HCT116 (cell line): ENCODE measurements at regions of chr12 and their contacts with region 1.

Region 1: DNA sequence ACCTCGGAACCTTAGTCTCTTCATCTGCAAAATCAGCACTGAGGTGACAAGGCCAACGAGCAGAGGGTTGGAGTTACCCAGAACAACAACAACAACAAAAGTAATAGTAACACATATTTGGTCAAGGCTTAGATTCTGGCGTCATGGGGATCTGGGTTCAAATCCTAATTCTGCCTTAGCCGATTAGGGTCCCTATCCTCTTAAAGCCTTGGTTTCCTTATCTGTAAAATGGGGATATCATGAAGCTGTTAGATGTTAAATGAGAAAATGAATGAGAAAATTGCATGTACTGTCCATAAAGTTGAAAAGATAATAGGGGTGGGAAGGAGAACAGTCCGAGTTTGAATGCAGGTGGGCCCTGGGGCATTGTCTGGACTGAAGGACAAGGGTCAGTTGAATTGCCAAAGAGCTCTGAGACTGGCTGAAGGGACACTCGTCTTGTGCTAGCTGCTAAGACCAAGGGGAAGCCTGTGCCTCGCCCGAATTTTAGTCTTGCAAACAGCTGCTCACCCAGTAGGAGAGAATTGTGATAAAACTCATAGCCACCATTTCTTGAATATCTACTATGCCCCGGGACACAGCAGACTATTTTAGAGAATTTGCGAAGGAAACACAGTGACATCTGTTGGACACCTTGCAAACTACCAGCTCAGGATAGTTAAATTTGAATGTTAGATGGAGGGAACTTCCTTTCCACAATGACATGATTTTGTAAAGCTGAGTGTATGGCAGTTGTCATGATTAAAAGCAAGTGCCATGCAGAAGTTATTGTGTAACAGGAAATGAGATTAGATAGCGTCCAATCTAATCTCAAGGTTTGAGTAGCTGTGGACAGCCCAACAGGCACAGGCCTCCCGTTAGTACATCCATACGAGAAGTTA is 6.8 kb upstream of the HNF1A start:
- DNase-seq: peak; percentile 58
- ATAC-seq: peak; percentile 91
- H3K4me3 ChIP-seq: no peak overlapping the region
- H3K27ac ChIP-seq: no peak overlapping the region
- H3K4me1 ChIP-seq: no peaks in the 10 kb centered on the region
- H3K27me3 ChIP-seq: no peaks in the 10 kb centered on the region
- CTCF ChIP-seq: peak; percentile 76 to 90 (median 81)
- POLR2A ChIP-seq: no peak
- RAD21 ChIP-seq: peak; percentile 97

Region 2: GRCh38 chr12:120249875-120250795 is 721.4 kb before region 1 on chr12:
- CTCF ChIA-PET with region 1: no interaction called
- POLR2A ChIA-PET with region 1: no interaction called
- RAD21 ChIA-PET with region 1: no interaction called
- intact Hi-C with region 1: no loop called
- DNase-seq: no peak
- ATAC-seq: no peak
- H3K4me3 ChIP-seq: no peak overlapping the region
- H3K27ac ChIP-seq: peak overlapping the region; percentile 72
- H3K4me1 ChIP-seq: peaks cover 53 to 84% of the 10 kb centered on the region in 2 experiments
- H3K27me3 ChIP-seq: no peaks in the 10 kb centered on the region
- CTCF ChIP-seq: no peak
- POLR2A ChIP-seq: no peak
- RAD21 ChIP-seq: no peak

Region 3: DNA sequence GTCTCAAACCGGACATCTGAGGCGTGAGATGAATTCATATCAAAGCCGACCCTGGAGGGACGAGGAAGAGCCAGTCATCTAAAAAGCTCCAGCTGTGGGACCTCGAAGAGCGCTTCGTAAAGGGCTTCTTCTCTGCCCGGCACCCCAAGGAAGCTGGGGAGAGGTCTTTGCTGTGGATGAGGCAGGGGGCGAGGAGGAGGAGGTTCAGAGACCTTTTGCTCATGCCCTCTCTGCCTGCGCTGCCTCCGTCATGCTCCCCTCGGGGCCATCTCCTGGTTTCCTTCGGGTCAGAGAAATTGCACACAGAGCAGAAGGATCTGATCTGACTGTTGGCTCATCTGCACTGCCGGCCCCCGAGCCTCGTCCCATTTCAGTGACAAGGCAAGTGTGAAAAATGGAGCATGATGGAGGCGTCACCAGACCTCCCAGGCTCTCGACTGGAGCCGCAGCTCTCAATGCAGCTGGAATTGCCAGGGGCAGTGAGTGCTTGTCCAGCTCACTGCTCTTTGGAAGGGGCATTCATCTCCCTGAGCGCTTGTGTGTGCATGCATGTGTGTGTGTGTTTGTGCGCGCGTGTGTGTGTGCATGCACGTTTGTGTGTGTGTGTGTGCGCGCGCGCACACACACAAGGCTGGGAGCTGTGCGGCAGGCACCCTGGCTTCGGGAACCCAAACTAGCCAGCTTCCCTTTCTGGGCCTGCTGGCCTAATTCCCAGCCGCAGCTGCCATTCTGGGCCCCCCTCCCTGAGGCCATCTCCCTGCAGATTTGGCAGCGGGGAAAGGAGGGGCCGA is 321.9 kb before region 1 on chr12:
- CTCF ChIA-PET with region 1: interaction called, 18 read pairs
- POLR2A ChIA-PET with region 1: interaction called, 5 read pairs
- RAD21 ChIA-PET with region 1: no interaction called
- intact Hi-C with region 1: loop called (anchors 1 kb)
- DNase-seq: no peak
- ATAC-seq: peak; percentile 6; the same call in 1 of the 2 replicates
- H3K4me3 ChIP-seq: peak overlapping the region in 1 of 2 experiments; percentile 59; a peak in 1 of 4 replicates
- H3K27ac ChIP-seq: no peak overlapping the region
- H3K4me1 ChIP-seq: peaks cover 5 to 32% of the 10 kb centered on the region in 2 experiments; a peak in 3 of 4 replicates
- H3K27me3 ChIP-seq: no peaks in the 10 kb centered on the region; the same call in 1 of the 2 replicates
- CTCF ChIP-seq: no peak
- POLR2A ChIP-seq: no peak
- RAD21 ChIP-seq: no peak

Region 4: DNA sequence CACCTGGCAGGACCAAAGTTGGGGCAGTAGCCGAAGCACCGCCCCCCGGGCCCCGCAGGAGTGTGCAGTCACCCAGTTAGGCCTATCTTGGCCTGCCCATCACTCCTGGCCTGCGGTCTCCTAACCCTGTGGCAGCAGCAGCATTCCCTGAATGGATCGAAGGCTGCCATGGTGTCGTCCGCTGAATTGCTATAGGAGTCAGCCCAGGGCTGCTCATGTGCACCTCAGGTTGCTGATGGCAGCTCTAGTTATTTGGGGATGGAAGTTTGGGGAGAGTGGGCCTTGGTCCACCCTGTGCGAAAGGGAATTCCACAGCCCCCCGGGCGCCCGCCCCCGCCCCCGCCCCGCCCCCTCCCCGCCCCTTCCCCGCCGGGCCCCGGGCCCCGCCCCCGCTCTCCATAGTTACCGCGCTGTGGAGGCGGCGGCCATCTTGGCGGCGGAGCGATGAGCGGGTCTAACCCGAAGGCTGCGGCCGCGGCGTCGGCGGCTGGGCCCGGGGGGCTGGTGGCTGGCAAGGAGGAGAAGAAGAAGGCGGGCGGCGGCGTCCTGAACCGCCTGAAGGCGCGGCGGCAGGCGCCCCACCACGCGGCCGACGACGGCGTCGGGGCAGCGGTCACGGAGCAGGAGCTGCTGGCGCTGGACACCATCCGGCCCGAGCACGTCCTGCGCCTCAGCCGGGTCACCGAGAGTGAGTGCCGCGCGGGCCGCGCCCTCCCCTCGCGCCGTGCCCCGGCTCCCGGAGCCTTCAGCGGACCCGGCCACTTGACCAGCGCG is 261.3 kb before region 1 on chr12 and contains the start of gene UNC119B:
- CTCF ChIA-PET with region 1: no interaction called
- POLR2A ChIA-PET with region 1: no interaction called
- RAD21 ChIA-PET with region 1: no interaction called
- intact Hi-C with region 1: loop called (anchors 5 kb)
- DNase-seq: no peak
- ATAC-seq: peak; percentile 81
- H3K4me3 ChIP-seq: peak within 1 kb of the TSS; percentile 86 to 90
- H3K27ac ChIP-seq: peak within 1 kb of the TSS; percentile 90
- H3K4me1 ChIP-seq: peaks cover 11 to 15% of the 10 kb centered on the region in 2 experiments
- H3K27me3 ChIP-seq: no peaks in the 10 kb centered on the region
- CTCF ChIP-seq: no peak
- POLR2A ChIP-seq: no peak
- RAD21 ChIP-seq: no peak
- total RNA-seq, gene UNC119B: 33.8 TPM

Region 5: DNA sequence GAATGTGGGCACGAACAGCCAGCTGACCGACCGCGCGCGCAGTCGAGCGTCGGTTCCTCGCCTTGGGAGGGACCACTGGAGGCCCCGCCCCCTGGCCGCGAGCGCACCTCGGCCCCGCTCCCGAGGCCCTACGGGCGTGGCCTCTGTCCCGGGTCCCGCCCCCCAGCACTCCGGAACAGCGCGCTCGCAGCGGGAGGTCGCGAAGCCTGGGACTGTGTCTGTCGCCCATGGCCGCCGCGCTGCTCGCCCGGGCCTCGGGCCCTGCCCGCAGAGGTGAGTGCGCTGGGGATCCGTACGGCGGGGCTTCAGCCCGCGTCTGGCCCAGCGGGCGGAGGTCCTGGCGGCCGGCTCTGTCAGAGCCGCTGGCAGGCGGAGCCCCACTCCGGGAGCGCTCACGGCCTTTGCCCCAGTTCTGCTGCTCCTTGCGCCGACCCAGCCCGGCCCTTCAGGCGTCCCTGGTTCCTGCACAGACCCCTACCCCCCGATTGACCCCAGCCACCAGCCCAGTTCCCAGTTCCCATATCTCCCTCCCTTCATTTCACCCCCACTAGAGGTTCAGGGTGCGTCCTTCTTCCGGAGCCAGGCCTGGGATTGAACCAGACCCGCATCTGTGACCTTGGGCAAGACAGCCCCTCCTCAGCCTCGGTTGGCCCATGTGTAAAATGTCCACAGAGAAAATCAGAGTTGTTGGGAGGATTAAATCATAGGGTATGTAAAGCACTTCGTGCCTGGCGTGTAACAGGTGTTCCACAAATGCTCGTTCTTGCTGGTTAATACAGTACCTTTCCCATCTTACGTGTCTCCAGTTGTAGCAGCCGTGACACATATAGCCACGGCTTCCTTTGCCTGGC is 245.7 kb before region 1 on chr12 and contains the start of gene ACADS:
- CTCF ChIA-PET with region 1: no interaction called
- POLR2A ChIA-PET with region 1: no interaction called
- RAD21 ChIA-PET with region 1: no interaction called
- intact Hi-C with region 1: loop called (anchors 5 kb)
- DNase-seq: peak; percentile 51
- ATAC-seq: peak; percentile 100
- H3K4me3 ChIP-seq: peak within 1 kb of the TSS; percentile 81 to 83
- H3K27ac ChIP-seq: peak within 1 kb of the TSS; percentile 73
- H3K4me1 ChIP-seq: peaks cover 3 to 18% of the 10 kb centered on the region in 2 experiments; a peak in 2 of 4 replicates
- H3K27me3 ChIP-seq: no peaks in the 10 kb centered on the region
- CTCF ChIP-seq: no peak
- POLR2A ChIP-seq: peak; percentile 68
- RAD21 ChIP-seq: 0 out of 2 replicates have a peak, but pooled peaks have one; percentile 6
- total RNA-seq, gene ACADS: 21.4 TPM

Region 6: DNA sequence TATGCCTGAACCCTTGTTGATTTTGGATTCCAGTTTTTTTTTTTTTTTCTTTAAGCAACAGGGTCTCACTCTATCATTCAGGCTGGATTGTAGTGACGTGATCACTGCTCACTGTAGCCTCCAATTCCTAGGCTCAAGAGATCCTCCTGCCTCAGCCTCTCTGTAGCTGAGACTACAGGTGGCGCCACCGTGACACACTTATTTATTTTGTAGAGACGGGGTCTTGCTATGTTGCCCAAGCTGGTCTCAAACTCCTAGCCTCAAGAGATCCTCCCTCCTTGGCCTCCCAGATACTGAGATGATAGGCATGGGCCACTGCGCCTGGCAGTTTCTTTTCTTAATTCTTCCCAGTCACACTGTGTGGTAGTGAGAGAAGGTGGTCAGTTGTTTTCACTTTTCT is 220.7 kb before region 1 on chr12:
- CTCF ChIA-PET with region 1: no interaction called
- POLR2A ChIA-PET with region 1: no interaction called
- RAD21 ChIA-PET with region 1: interaction called in 1 of 2 experiments, 4 read pairs
- intact Hi-C with region 1: loop called (anchors 2 kb)
- DNase-seq: no peak
- ATAC-seq: peak; percentile 32; the same call in 1 of the 2 replicates
- H3K4me3 ChIP-seq: no peak overlapping the region
- H3K27ac ChIP-seq: no peak overlapping the region
- H3K4me1 ChIP-seq: peaks cover 3 to 11% of the 10 kb centered on the region in 2 experiments; a peak in 3 of 4 replicates
- H3K27me3 ChIP-seq: no peaks in the 10 kb centered on the region
- CTCF ChIP-seq: peak; percentile 20 to 47 (median 26); a peak in 3 of 6 replicates
- POLR2A ChIP-seq: no peak
- RAD21 ChIP-seq: peak; percentile 53

Region 7: GRCh38 chr12:120856980-120857379 is 114.6 kb before region 1 on chr12:
- CTCF ChIA-PET with region 1: interaction called, 11 read pairs
- POLR2A ChIA-PET with region 1: no interaction called
- RAD21 ChIA-PET with region 1: no interaction called
- intact Hi-C with region 1: loop called (anchors 2 kb)
- DNase-seq: peak; percentile 12
- ATAC-seq: peak; percentile 74
- H3K4me3 ChIP-seq: no peak overlapping the region
- H3K27ac ChIP-seq: no peak overlapping the region
- H3K4me1 ChIP-seq: no peaks in the 10 kb centered on the region
- H3K27me3 ChIP-seq: no peaks in the 10 kb centered on the region
- CTCF ChIP-seq: peak; percentile 38 to 61 (median 50)
- POLR2A ChIP-seq: no peak
- RAD21 ChIP-seq: peak; percentile 71

Region 8: DNA sequence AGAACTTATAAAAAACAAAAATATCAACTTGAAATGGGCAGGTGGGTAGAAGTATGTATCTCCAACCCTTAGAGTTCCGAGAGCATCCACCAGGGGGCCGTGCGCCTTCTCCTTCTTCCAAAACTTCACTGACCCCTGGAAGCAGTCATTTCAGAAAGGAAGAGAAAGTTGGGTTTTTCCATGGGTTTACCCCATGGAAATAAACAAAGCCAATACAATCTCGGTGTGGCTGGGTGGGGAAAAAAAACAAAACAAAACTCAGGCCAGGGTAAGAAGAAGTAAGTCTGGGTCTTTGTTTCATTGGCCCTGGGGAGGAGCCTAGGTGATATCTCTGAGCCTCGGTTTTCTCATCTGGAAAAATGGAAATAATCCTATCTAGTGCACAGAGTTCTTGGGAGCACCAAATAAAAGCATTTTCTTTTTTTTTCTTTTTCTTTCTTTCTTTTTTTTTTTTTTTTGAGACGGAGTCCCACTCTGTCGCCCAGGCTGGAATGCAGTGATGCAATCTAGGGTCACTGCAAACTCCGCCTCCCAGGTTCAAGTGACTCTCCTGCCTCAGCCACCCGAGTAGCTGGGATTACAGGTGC is 26.8 kb before region 1 on chr12:
- CTCF ChIA-PET with region 1: interaction called, 7 read pairs
- POLR2A ChIA-PET with region 1: interaction called, 4 read pairs
- RAD21 ChIA-PET with region 1: interaction called in 1 of 2 experiments, 3 read pairs
- intact Hi-C with region 1: loop called (anchors 2 kb)
- DNase-seq: no peak
- ATAC-seq: peak; percentile 92
- H3K4me3 ChIP-seq: no peak overlapping the region
- H3K27ac ChIP-seq: no peak overlapping the region
- H3K4me1 ChIP-seq: peaks cover 4 to 12% of the 10 kb centered on the region in 2 experiments; a peak in 3 of 4 replicates
- H3K27me3 ChIP-seq: no peaks in the 10 kb centered on the region
- CTCF ChIP-seq: peak; percentile 65 to 88 (median 80); a peak in 5 of 6 replicates
- POLR2A ChIP-seq: no peak
- RAD21 ChIP-seq: peak; percentile 66

Region 9: GRCh38 chr12:121190523-121191031 is 219.0 kb after region 1 on chr12:
- CTCF ChIA-PET with region 1: no interaction called
- POLR2A ChIA-PET with region 1: no interaction called
- RAD21 ChIA-PET with region 1: no interaction called
- intact Hi-C with region 1: no loop called
- DNase-seq: no peak
- ATAC-seq: no peak
- H3K4me3 ChIP-seq: no peak overlapping the region
- H3K27ac ChIP-seq: no peak overlapping the region
- H3K4me1 ChIP-seq: no peaks in the 10 kb centered on the region
- H3K27me3 ChIP-seq: no peaks in the 10 kb centered on the region
- CTCF ChIP-seq: no peak
- POLR2A ChIP-seq: no peak
- RAD21 ChIP-seq: no peak

Region 10: DNA sequence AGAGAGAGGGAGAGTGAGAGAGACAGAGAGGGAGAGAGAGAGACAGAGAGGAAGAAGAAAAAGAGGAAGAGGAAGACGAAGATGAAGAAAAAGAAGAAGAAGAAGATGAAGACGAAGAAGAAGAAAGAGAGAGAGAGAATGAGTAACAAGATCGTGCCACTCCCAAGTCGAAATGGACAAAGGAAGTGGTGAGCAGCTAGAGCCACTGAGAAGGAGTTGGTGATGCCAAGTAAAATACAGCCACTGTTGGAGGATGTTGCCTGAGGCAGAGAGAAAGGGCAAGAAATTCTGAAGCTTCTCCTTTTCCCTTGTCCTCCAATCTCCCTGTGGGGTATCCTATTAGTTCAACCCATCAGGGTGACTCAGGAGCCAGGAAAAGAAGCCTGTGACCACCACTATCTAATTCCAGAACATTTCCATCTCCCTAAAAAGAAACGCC is 393.2 kb after region 1 on chr12:
- CTCF ChIA-PET with region 1: no interaction called
- POLR2A ChIA-PET with region 1: no interaction called
- RAD21 ChIA-PET with region 1: no interaction called
- intact Hi-C with region 1: no loop called
- DNase-seq: no peak
- ATAC-seq: no peak
- H3K4me3 ChIP-seq: no peak overlapping the region
- H3K27ac ChIP-seq: no peak overlapping the region
- H3K4me1 ChIP-seq: peaks cover 0 to 7% of the 10 kb centered on the region in 2 experiments; a peak in 2 of 4 replicates
- H3K27me3 ChIP-seq: peaks cover 3% of the 10 kb centered on the region; the same call in 1 of the 2 replicates
- CTCF ChIP-seq: no peak
- POLR2A ChIP-seq: no peak
- RAD21 ChIP-seq: no peak